ENCODE measurements at regions of chr3 and their contacts with region 1.

Region 1: DNA sequence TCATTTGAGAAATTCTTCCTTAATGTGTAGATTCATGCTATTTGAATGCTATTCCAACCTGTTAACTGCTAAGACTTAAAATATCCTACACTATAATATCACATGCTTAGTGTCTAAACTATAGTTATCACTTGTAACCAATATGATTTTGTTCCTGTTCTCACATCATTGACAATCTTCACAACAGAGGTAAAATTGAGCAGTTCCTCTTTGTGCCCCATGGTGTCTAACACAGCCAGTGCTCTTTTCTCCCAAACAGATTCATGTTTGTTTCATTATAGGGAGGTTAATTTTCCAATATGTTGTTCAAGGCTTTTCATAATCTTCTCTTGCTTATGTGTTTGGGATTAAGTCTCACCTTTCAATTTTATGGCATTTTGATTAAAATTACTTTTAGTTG is 591.1 kb downstream of the ZPLD1 start:
- DNase-seq: no peak
- ATAC-seq: no peak
- H3K4me3 ChIP-seq: no peak overlapping the region
- H3K27ac ChIP-seq: no peak overlapping the region
- H3K4me1 ChIP-seq: no peaks in the 10 kb centered on the region
- H3K27me3 ChIP-seq: no peaks in the 10 kb centered on the region
- CTCF ChIP-seq: no peak
- EP300 ChIP-seq: no peak
- POLR2A ChIP-seq: no peak
- RAD21 ChIP-seq: no peak

Region 2: DNA sequence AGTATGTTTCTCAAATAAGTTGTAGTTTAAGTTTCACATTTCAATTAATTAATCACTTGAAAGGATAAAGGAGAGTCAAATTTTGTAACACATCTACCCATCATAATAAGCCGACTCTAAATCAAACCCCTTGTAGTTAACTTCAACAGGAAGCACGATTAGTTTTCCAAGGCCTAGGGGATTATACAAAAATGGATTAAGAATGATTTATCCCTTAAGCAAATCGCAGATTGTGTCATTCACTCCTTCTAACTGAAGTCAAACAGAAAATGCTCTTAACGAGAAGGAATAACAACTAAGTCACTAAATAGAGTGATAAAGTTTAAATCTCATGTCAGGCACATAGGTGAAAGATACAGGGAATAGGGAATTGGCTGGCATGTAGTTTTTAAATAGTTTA is 201.8 kb after region 1 on chr3:
- CTCF ChIA-PET with region 1: no interaction called
- POLR2A ChIA-PET with region 1: no interaction called
- in situ Hi-C with region 1: no loop called
- intact Hi-C with region 1: no loop called
- DNase-seq: no peak
- ATAC-seq: no peak
- H3K4me3 ChIP-seq: no peak overlapping the region
- H3K27ac ChIP-seq: no peak overlapping the region
- H3K4me1 ChIP-seq: no peaks in the 10 kb centered on the region
- H3K27me3 ChIP-seq: no peaks in the 10 kb centered on the region
- CTCF ChIP-seq: no peak
- EP300 ChIP-seq: no peak
- POLR2A ChIP-seq: no peak
- RAD21 ChIP-seq: no peak

Region 3: DNA sequence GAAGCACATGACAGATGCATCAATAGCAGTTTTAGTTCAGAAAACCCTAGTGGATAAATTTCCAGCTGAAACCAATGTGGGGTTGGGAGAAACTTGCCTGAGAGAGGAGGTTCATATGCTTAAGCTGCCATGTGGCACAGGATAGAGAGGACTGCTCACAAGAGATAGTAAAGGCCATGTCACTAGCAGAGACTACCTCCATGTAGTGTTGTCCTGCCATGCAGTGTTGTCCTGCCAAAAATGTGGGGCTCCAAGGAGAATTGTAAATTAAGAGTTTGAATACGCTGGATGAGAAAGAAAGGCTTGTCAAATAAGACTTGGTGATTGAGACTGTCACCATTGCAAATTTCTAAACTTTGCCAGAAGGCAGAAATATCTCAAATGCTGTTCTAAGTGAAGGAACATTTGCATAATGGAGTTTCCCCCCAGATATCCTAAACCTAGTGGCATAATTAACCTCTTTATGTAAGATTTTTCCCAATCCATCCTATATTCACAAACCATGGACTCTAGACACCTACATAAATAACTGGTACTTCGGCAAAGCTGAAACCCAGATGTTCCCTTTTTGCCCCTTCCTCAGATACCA is 1402.6 kb after region 1 on chr3:
- CTCF ChIA-PET with region 1: no interaction called
- POLR2A ChIA-PET with region 1: no interaction called
- in situ Hi-C with region 1: loop called (anchors 10 kb)
- intact Hi-C with region 1: no loop called
- DNase-seq: no peak
- ATAC-seq: no peak
- H3K4me3 ChIP-seq: no peak overlapping the region
- H3K27ac ChIP-seq: no peak overlapping the region
- H3K4me1 ChIP-seq: no peaks in the 10 kb centered on the region
- H3K27me3 ChIP-seq: no peaks in the 10 kb centered on the region
- CTCF ChIP-seq: no peak
- EP300 ChIP-seq: no peak
- POLR2A ChIP-seq: no peak
- RAD21 ChIP-seq: no peak

Measured in K562 (cell line).